Esophagus muscularis mucosa (tissue), 4 donors: ENCODE measurements at regions of chr4 and their contacts with region 1.

Region 1: DNA sequence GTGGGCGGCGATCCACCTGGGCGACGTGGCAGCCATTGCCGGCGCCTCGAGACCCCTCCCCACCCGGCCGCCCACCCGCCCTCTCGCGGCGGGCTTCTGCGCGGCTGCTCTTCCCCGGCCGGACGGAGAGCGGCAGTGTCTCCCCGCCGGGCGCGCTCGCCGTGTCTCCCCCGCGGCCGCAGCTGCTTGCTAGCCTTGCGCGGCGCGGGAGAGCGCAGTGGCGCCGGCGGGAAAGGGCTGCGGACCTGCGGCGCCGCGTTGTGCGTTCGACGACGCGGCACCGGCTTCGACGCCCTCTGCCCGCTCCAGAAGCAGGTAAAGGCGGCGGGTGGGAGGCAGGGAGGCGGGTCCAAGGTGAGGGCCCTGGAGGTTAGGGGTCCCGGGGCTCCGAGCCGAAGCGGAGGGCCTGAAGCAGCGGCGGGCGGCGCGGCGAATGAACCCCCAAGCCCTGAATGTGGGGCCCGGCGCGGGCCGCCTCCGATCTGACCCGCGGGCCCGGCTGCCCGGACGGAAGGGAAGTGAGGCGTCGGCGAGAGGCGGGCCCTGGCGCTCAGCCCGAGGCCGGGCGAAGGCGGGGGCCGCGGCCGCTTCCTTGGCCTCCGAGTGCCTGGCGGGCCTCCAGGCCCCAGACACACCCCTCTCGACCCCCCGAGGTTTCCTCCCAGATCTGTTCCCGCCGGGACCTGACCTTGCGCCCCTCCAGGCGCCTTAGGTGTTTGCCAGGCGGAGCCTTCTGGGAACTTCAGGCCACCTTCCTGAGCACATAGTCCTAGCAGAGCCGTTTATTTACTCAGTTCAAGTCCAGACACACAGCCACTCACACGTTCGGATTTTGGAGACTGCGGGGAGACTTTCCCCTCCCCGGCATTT is at the start of gene N4BP2:
- DNase-seq: peak; percentile 93
- H3K4me3 ChIP-seq: peak within 1 kb of the TSS; percentile 80 to 96 (median 90)
- H3K27ac ChIP-seq: peak within 1 kb of the TSS; percentile 96 to 100 (median 100)
- H3K4me1 ChIP-seq: peaks cover 16 to 32% (median 29%) of the 10 kb centered on the region in 4 donors
- H3K27me3 ChIP-seq: no peaks in the 10 kb centered on the region
- CTCF ChIP-seq: peak; percentile 67 to 89 (median 85)
- EP300 ChIP-seq: no peak
- POLR2A ChIP-seq: peak; percentile 94
- total RNA-seq, gene N4BP2: 5.5 to 9.7 (median 7.7) TPM

Region 2: GRCh38 chr4:39458505-39459300 is 598.2 kb before region 1 on chr4 and contains the starts of genes LIAS and RPL9:
- intact Hi-C with region 1: loop called (anchors 10 kb)
- DNase-seq: peak; percentile 99
- H3K4me3 ChIP-seq: peak within 1 kb of the TSS; percentile 70 to 86 (median 77)
- H3K27ac ChIP-seq: peak within 1 kb of the TSS; percentile 95 to 96 (median 96)
- H3K4me1 ChIP-seq: peaks cover 24 to 47% (median 42%) of the 10 kb centered on the region in 4 donors
- H3K27me3 ChIP-seq: no peaks in the 10 kb centered on the region
- CTCF ChIP-seq: peak in 1 of 3 experiments; percentile 12
- EP300 ChIP-seq: no peak
- POLR2A ChIP-seq: peak; percentile 92
- total RNA-seq, gene LIAS: 8.5 to 11.6 (median 9.7) TPM
- total RNA-seq, gene RPL9: 1,962 to 6,543 (median 3,653) TPM

Region 3: DNA sequence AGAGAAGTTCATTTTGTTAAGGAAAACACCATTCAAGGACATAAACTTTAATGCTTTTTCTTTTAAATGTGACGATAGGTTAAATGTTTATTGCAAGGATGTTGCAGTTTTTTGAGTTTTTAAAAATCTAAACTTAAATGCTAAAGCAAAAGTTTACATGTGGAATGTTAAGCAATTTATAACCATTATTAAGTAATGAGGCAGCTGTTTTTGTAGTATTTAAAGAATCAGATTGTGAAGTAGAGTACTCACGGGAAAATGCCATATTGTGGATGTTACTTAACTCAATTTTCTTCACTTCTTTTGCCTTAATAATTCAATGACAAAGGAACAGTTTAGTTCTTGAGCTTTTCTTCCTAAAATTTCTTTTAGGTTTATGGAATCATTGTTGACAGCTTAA is 315.6 kb before region 1 on chr4:
- intact Hi-C with region 1: no loop called
- DNase-seq: no peak
- H3K4me3 ChIP-seq: no peak overlapping the region
- H3K27ac ChIP-seq: no peak overlapping the region
- H3K4me1 ChIP-seq: peaks cover 2 to 17% (median 15%) of the 10 kb centered on the region in 4 donors
- H3K27me3 ChIP-seq: no peaks in the 10 kb centered on the region
- CTCF ChIP-seq: no peak
- EP300 ChIP-seq: no peak
- POLR2A ChIP-seq: no peak

Region 4: GRCh38 chr4:39977489-39978377 is 79.2 kb before region 1 on chr4 and contains the start of gene PDS5A:
- intact Hi-C with region 1: loop called (anchors 5 kb)
- DNase-seq: peak; percentile 93
- H3K4me3 ChIP-seq: peak within 1 kb of the TSS; percentile 84 to 97 (median 90)
- H3K27ac ChIP-seq: peak within 1 kb of the TSS; percentile 96 to 97 (median 97)
- H3K4me1 ChIP-seq: peaks cover 14 to 41% (median 31%) of the 10 kb centered on the region in 4 donors
- H3K27me3 ChIP-seq: no peaks in the 10 kb centered on the region
- CTCF ChIP-seq: peak; percentile 84 to 86 (median 85)
- EP300 ChIP-seq: no peak
- POLR2A ChIP-seq: no peak
- total RNA-seq, gene PDS5A: 48.2 to 56.1 (median 51.3) TPM

Region 5: DNA sequence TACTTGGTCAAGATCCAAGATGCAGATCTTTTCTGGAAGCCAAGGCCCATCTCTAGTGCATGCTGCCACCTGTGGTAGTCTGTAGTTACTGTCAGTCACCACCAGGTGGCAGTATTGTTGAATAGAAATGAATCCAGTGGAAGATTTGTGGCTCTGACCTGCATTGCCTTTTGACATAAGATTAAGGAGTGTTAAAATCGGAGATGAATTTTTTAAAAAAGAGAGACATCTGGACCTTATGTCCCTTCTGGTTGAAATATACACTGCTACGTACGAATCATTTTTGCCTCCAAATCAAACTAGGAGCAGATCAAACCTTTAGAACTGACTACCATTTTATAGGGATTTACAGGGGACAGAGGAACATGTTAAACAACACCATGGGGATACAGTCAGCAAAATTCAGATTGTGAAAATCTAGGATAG is 93.0 kb after region 1 on chr4:
- intact Hi-C with region 1: loop called (anchors 10 kb)
- DNase-seq: no peak
- H3K4me3 ChIP-seq: no peak overlapping the region
- H3K27ac ChIP-seq: no peak overlapping the region
- H3K4me1 ChIP-seq: peaks cover 0 to under 1% (median 0%) of the 10 kb centered on the region in 4 donors
- H3K27me3 ChIP-seq: no peaks in the 10 kb centered on the region
- CTCF ChIP-seq: peak; percentile 85 to 89 (median 87)
- EP300 ChIP-seq: no peak
- POLR2A ChIP-seq: no peak

Region 6: GRCh38 chr4:40316782-40317635 is 260.1 kb after region 1 on chr4:
- intact Hi-C with region 1: loop called (anchors 5 kb)
- DNase-seq: no peak
- H3K4me3 ChIP-seq: peak overlapping the region; percentile 13 to 52 (median 49)
- H3K27ac ChIP-seq: peak overlapping the region; percentile 79 to 80 (median 80)
- H3K4me1 ChIP-seq: peaks cover 9 to 30% (median 21%) of the 10 kb centered on the region in 4 donors
- H3K27me3 ChIP-seq: no peaks in the 10 kb centered on the region
- CTCF ChIP-seq: peak; percentile 65 to 86 (median 74)
- EP300 ChIP-seq: no peak
- POLR2A ChIP-seq: no peak

Region 7: GRCh38 chr4:40587823-40588222 is 530.9 kb after region 1 on chr4:
- intact Hi-C with region 1: no loop called
- DNase-seq: no peak
- H3K4me3 ChIP-seq: no peak overlapping the region
- H3K27ac ChIP-seq: peak overlapping the region in 1 of 4 donors; percentile 44
- H3K4me1 ChIP-seq: no peaks in the 10 kb centered on the region
- H3K27me3 ChIP-seq: no peaks in the 10 kb centered on the region
- CTCF ChIP-seq: no peak
- EP300 ChIP-seq: no peak
- POLR2A ChIP-seq: no peak